Ovary (tissue), 10 donors: ENCODE measurements at regions of chr1 and their contacts with region 1.

Region 1: DNA sequence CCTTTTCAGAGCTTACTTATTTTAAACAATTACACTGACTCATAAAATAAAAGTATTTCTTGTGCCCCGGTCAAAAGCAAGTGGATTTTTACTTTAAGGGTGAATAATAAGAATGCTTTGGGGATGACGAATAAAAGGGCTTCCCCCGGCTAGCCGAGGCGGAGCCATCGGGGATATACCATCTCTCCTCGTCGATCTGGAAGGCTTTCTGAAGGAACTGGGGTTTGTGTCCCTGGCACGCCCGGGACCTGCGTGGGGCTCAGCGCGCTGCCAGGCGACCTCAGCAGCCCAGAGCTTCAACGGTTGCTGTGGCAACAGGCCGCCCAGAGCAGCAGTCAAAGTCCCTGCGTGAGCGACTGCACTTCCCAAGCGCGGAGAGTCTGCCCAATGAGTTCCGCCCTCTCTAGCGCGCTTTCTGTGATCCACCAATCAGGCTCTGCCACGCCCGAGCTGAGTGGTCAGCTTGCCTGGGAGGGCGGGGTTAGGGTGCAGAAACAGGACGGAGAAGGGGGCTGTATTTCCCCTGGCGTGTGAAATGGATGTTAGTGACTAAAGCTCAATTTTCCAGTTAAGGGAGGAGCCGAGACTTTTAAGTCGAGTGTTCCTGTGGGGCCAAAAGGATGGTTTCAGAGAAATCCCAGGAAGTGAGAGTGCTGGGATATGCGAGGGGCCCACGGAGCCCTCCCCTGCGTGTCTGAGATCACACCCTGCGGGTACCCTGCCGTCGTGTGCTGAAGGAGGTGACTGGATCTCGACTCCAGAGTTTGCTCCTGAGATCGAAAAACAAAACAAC is 33.0 kb upstream of the MGST3 start:
- DNase-seq: peak; percentile 93 to 96 (median 94)
- H3K4me3 ChIP-seq: peak overlapping the region; percentile 48
- H3K27ac ChIP-seq: peak overlapping the region in 1 of 2 donors; percentile 2
- H3K4me1 ChIP-seq: no peaks in the 10 kb centered on the region
- H3K27me3 ChIP-seq: no peaks in the 10 kb centered on the region
- CTCF ChIP-seq: no peak
- EP300 ChIP-seq: no peak
- POLR2A ChIP-seq: no peak

Region 2: GRCh38 chr1:164223378-164223777 is 1374.7 kb before region 1 on chr1:
- intact Hi-C with region 1: no loop called
- DNase-seq: no peak
- H3K4me3 ChIP-seq: no peak overlapping the region
- H3K27ac ChIP-seq: no peak overlapping the region
- H3K4me1 ChIP-seq: no peaks in the 10 kb centered on the region
- H3K27me3 ChIP-seq: no peaks in the 10 kb centered on the region
- CTCF ChIP-seq: no peak
- EP300 ChIP-seq: no peak
- POLR2A ChIP-seq: no peak

Region 3: GRCh38 chr1:165392634-165393571 is 205.2 kb before region 1 on chr1:
- intact Hi-C with region 1: loop called (anchors 2 to 5 kb)
- DNase-seq: peak; percentile 66 to 84 (median 76)
- H3K4me3 ChIP-seq: no peak overlapping the region
- H3K27ac ChIP-seq: no peak overlapping the region
- H3K4me1 ChIP-seq: peaks cover 2% of the 10 kb centered on the region
- H3K27me3 ChIP-seq: no peaks in the 10 kb centered on the region
- CTCF ChIP-seq: peak; percentile 77 to 88 (median 81)
- EP300 ChIP-seq: no peak
- POLR2A ChIP-seq: no peak

Region 4: DNA sequence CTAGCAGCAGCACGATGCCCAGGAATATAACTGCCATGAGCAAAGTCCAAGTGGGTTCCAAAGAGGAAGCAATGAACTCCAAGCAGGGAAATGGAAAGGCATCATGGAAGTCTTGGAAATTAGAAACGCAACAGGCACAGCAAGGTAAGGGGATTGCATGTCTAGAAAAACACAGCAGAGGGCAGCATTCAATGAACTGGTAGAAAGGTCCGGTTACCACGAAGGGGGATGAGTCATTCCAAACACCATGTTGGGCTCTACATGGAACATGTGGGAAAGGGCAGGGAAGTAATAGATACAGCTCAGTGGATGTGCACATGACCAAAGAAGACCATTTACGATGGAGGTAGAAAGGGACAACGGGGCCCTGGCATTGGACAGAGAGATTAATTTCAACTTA is 189.6 kb before region 1 on chr1:
- intact Hi-C with region 1: no loop called
- DNase-seq: no peak
- H3K4me3 ChIP-seq: no peak overlapping the region
- H3K27ac ChIP-seq: no peak overlapping the region
- H3K4me1 ChIP-seq: no peaks in the 10 kb centered on the region
- H3K27me3 ChIP-seq: no peaks in the 10 kb centered on the region
- CTCF ChIP-seq: no peak
- EP300 ChIP-seq: no peak
- POLR2A ChIP-seq: no peak

Region 5: GRCh38 chr1:165631342-165632151 is 33.5 kb after region 1 on chr1:
- intact Hi-C with region 1: loop called in 1 of 4 experiments (anchors 2 kb)
- DNase-seq: peak; percentile 35 to 63 (median 58)
- H3K4me3 ChIP-seq: peak overlapping the region; percentile 84
- H3K27ac ChIP-seq: peak overlapping the region; percentile 15 to 85
- H3K4me1 ChIP-seq: peaks cover 7% of the 10 kb centered on the region
- H3K27me3 ChIP-seq: no peaks in the 10 kb centered on the region
- CTCF ChIP-seq: no peak
- EP300 ChIP-seq: no peak
- POLR2A ChIP-seq: no peak

Region 6: DNA sequence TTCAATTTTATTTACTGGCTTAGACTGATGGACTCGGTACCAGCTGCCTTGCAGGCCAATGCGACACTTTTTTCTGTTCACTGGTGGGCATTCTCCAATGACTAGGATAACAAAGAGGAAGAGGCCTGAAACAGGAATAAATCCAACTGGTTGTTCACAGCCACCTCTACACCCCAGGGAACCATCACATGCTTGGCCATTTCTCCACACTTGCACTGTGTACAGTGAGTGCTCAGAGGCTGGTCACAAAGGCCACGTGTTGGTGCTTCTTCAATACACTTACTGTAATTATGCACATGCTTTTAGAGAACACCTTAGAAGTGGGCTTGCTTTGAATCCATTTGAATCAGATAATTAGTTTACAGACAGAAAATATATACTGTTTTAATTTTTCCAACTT is 455.3 kb after region 1 on chr1:
- intact Hi-C with region 1: no loop called
- DNase-seq: no peak
- H3K4me3 ChIP-seq: no peak overlapping the region
- H3K27ac ChIP-seq: no peak overlapping the region
- H3K4me1 ChIP-seq: no peaks in the 10 kb centered on the region
- H3K27me3 ChIP-seq: no peaks in the 10 kb centered on the region
- CTCF ChIP-seq: no peak
- EP300 ChIP-seq: no peak
- POLR2A ChIP-seq: no peak